ENCODE measurements at regions of chr17 and their contacts with region 1.

Region 1: GRCh38 chr17:67245073-67245755 is at the start of gene HELZ:
- DNase-seq: peak; percentile 45 to 81 (median 79)
- ATAC-seq: peak; percentile 89
- H3K4me3 ChIP-seq: peak within 1 kb of the TSS; percentile 83
- H3K4me3 Mint-ChIP-seq: peak within 1 kb of the TSS; percentile 87 to 95 (median 90)
- H3K27ac ChIP-seq: peak within 1 kb of the TSS; percentile 84
- H3K27ac Mint-ChIP-seq: peak within 1 kb of the TSS; percentile 81 to 96 (median 90)
- H3K4me1 ChIP-seq: peaks cover 11 to 49% of the 10 kb centered on the region in 2 donors
- H3K4me1 Mint-ChIP-seq: peaks cover 31 to 52% (median 48%) of the 10 kb centered on the region in 7 donors
- H3K27me3 ChIP-seq: no peaks in the 10 kb centered on the region
- H3K27me3 Mint-ChIP-seq: peaks cover 0 to 5% (median 0%) of the 10 kb centered on the region in 5 donors
- total RNA-seq, gene HELZ: 68.6 to 114 (median 89.3) TPM

Region 2: GRCh38 chr17:67258821-67259468 is 13.7 kb after region 1 on chr17:
- CTCF ChIA-PET with region 1: no interaction called
- POLR2A ChIA-PET with region 1: interaction called, 4 read pairs
- intact Hi-C with region 1: loop called in 1 of 2 experiments (anchors 1 kb)
- DNase-seq: peak in 1 of 9 donors; percentile 27
- ATAC-seq: peak; percentile 73
- H3K4me3 ChIP-seq: no peak overlapping the region
- H3K4me3 Mint-ChIP-seq: peak overlapping the region in 5 of 10 donors; percentile 29 to 71 (median 53)
- H3K27ac ChIP-seq: no peak overlapping the region
- H3K27ac Mint-ChIP-seq: peak overlapping the region in 3 of 9 donors; percentile 67 to 82 (median 71)
- H3K4me1 ChIP-seq: peaks cover 9 to 25% of the 10 kb centered on the region in 2 donors
- H3K4me1 Mint-ChIP-seq: peaks cover 14 to 37% (median 20%) of the 10 kb centered on the region in 7 donors
- H3K27me3 ChIP-seq: no peaks in the 10 kb centered on the region
- H3K27me3 Mint-ChIP-seq: peaks cover 0 to under 1% (median 0%) of the 10 kb centered on the region in 5 donors

Region 3: GRCh38 chr17:67293251-67294203 is 48.3 kb after region 1 on chr17:
- CTCF ChIA-PET with region 1: interaction called, 3 read pairs
- POLR2A ChIA-PET with region 1: no interaction called
- intact Hi-C with region 1: loop called in 1 of 2 experiments (anchors 1 kb)
- DNase-seq: peak; percentile 26 to 67 (median 61)
- ATAC-seq: peak; percentile 97
- H3K4me3 ChIP-seq: no peak overlapping the region
- H3K4me3 Mint-ChIP-seq: peak overlapping the region in 9 of 10 donors; percentile 14 to 68 (median 58)
- H3K27ac ChIP-seq: no peak overlapping the region
- H3K27ac Mint-ChIP-seq: peak overlapping the region in 1 of 9 donors; percentile 55
- H3K4me1 ChIP-seq: peaks cover 0 to 4% of the 10 kb centered on the region in 2 donors
- H3K4me1 Mint-ChIP-seq: peaks cover 0 to 5% (median 0%) of the 10 kb centered on the region in 7 donors
- H3K27me3 ChIP-seq: no peaks in the 10 kb centered on the region
- H3K27me3 Mint-ChIP-seq: no peaks in the 10 kb centered on the region

Region 4: GRCh38 chr17:67366193-67367157 is 121.3 kb after region 1 on chr17 and contains the start of gene PSMD12:
- CTCF ChIA-PET with region 1: no interaction called
- POLR2A ChIA-PET with region 1: interaction called, 6 read pairs
- intact Hi-C with region 1: loop called (anchors 1 to 2 kb)
- DNase-seq: peak; percentile 86 to 96 (median 93)
- ATAC-seq: peak; percentile 99
- H3K4me3 ChIP-seq: peak within 1 kb of the TSS; percentile 76
- H3K4me3 Mint-ChIP-seq: peak within 1 kb of the TSS; percentile 91 to 99 (median 96)
- H3K27ac ChIP-seq: peak within 1 kb of the TSS; percentile 89
- H3K27ac Mint-ChIP-seq: peak within 1 kb of the TSS; percentile 82 to 99 (median 96)
- H3K4me1 ChIP-seq: peaks cover 22 to 25% of the 10 kb centered on the region in 2 donors
- H3K4me1 Mint-ChIP-seq: peaks cover 32 to 51% (median 47%) of the 10 kb centered on the region in 7 donors
- H3K27me3 ChIP-seq: no peaks in the 10 kb centered on the region
- H3K27me3 Mint-ChIP-seq: no peaks in the 10 kb centered on the region
- total RNA-seq, gene PSMD12: 35.8 to 54.4 (median 40.5) TPM